ENCODE measurements at regions of chr18 and their contacts with region 1.

Region 1: GRCh38 chr18:9683407-9684396 is 24.4 kb upstream of the RAB31 start:
- DNase-seq: no peak
- ATAC-seq: peak; percentile 92
- H3K4me3 ChIP-seq: peak overlapping the region in 1 of 2 experiments; percentile 6; a peak in 1 of 4 replicates
- H3K27ac ChIP-seq: peak overlapping the region; percentile 89
- H3K4me1 ChIP-seq: peaks cover 26% of the 10 kb centered on the region
- H3K27me3 ChIP-seq: no peaks in the 10 kb centered on the region
- CTCF ChIP-seq: peak; percentile 72

Region 2: DNA sequence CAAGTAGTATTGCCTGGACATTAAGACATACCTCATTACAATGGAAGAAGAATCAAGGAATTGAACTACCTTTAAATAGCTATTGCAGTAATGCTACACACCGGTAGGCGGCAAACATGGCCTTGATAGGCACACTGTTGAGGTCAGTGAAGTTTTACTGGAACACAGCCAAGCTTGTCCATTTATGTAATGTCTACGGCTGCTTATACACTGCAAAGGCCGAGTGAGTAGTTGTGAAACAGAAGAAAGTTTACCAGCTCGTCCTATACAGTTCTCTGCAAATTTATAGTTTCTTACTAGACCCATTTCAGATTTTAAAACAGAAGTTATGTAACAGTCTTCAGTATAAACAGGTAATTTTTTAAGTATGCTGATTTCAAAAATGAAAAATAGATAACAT is 108.1 kb before region 1 on chr18:
- CTCF ChIA-PET with region 1: interaction called, 5 read pairs
- POLR2A ChIA-PET with region 1: no interaction called
- in situ Hi-C with region 1: no loop called
- intact Hi-C with region 1: loop called (anchors 5 kb)
- DNase-seq: peak; percentile 54
- ATAC-seq: peak; percentile 99
- H3K4me3 ChIP-seq: no peak overlapping the region
- H3K27ac ChIP-seq: peak overlapping the region; percentile 25; the same call in 1 of the 2 replicates
- H3K4me1 ChIP-seq: peaks cover 5% of the 10 kb centered on the region; the same call in 1 of the 2 replicates
- H3K27me3 ChIP-seq: no peaks in the 10 kb centered on the region
- CTCF ChIP-seq: peak; percentile 87

Measured in Panc1 (cell line).